ENCODE measurements at regions of chr19 and their contacts with region 1.

Region 1: DNA sequence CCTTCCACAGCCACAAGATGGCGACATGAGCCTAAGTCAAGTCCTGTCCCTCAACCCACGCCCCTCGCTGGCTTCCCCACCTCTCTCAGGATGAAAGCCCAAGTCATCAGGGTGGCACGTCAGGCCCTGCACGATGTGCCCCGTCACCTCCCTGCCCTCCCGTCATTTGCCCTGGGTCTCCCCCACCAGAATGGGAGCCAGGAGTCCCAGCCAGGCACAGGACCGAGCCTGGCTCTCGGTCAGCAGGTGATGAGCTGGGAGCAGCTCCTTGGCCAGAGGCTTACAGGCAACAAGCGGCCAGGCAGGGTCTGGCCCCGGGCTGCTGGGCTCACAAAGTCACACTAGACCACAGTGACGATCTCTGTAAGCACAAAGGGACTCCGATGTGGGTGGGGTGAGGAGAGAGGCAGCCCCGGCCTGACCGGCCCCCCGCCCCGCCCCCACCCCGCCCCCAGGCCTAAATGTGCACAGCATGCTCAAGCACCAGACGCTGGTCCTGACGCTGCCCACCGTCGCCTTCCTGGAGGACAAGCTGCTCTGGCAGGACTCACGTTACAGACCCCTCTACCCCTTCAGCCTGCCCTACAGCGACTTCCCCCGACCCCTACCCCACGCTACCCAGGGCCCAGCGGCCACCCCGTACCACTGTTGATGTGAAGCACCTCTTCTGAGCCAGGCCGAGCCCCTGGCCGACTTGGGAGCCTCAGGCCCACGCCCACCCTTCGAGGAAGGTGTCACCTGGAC is 7.3 kb downstream of the MRPL4 start:
- DNase-seq: no peak
- H3K4me3 ChIP-seq: no peak overlapping the region
- CTCF ChIP-seq: peak; percentile 71

Region 2: GRCh38 chr19:10226021-10226375 is 33.3 kb before region 1 on chr19:
- CTCF ChIA-PET with region 1: no interaction called
- POLR2A ChIA-PET with region 1: no interaction called
- DNase-seq: no peak
- H3K4me3 ChIP-seq: no peak overlapping the region
- CTCF ChIP-seq: no peak

Region 3: DNA sequence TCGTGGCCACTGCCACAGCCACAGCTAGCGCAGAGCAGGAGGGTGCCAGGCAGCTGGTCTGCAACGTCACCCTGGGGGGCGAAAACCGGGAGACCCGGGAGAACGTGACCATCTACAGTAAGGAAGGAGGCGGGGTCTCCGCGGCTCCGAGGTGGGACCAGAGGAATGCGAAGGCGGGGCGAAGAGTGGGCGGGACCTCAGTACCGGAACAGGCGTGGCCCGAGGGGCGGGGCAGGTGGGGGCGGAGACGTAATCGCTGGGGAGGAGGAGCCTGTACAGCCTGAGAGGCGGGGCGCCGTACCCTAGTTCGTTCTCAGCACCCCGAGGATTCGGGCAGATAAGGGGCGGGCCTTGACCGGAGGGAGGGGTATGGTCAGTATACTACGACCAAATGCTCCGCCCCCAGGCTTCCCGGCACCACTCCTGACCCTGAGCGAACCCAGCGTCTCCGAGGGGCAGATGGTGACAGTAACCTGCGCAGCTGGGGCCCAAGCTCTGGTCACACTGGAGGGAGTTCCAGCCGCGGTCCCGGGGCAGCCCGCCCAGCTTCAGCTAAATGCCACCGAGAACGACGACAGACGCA is 33.0 kb after region 1 on chr19:
- CTCF ChIA-PET with region 1: interaction called, 14 read pairs
- POLR2A ChIA-PET with region 1: no interaction called
- DNase-seq: no peak
- H3K4me3 ChIP-seq: peak overlapping the region; percentile 60
- CTCF ChIP-seq: no peak

Region 4: DNA sequence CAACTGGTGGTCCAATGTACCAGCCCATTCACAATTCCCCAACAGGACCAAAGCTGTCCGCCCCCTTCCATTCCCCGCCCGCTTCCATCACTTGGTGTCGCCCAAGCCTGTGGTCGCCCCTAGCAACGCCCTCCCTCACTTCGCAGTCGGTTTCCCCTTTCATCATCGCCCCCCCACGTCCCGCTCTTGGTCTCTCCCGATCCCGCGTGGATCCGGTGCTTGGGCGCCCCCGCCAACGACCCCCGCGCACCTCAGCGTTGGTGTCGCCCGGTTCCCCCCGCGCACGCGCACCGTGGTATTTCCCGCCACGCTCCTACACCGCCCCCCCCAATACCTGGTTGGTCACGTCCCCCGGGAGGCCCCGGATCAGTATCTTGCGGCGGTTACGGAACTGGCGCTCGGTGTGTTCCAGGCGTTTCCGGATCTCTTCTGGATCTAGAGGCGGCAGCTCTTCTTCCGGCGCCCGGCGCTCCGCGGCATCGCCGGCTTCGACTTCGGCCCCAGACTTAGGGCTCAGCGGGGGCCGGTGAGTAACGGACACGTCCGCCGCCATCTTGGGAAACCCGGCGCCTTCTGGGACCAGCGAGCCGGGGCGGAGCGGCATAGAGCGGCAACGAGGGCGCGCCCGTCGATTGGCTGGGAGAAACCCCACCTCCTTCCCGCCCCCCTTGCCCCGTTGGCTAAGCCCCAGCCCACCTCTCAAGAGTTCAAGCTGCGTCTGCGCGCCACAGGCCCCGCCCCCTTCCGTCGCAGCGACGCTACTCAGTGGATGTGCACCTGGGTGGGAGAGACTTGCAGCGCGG is 73.8 kb after region 1 on chr19 and contains the start of gene RAVER1:
- CTCF ChIA-PET with region 1: interaction called, 21 read pairs
- POLR2A ChIA-PET with region 1: interaction called, 3 read pairs
- DNase-seq: peak; percentile 67
- H3K4me3 ChIP-seq: peak within 1 kb of the TSS; percentile 87
- CTCF ChIP-seq: no peak

Region 5: DNA sequence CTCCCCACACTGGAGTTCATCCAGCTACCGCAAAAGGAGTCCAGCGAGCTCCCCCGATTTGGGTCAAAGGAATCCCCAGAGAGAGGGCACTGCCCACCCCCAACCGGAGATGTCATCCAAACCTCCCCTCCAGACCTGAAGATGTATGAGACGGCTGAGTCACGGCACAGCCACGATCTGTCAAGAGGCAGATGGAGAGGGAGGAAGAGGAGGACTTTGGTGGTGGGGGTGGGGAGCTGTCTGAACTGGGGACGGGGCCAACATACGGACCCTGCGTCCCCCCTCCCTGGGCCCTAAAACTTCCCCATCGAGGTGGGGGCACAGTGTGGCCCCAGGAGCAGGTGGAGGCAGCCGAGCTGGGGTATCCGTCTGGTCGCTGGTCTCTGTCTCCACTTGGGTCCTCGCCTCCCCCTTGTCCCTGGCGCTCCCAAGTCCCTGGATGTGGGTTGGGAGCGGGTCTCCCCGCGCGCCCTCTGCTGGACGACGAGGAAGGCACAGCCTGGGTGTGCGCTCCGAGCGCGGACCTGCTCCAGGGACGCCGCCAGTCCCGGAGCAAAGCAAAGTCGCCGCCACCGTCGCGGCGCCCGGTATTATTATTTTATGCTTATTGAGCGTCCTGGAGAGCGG is 164.8 kb after region 1 on chr19:
- CTCF ChIA-PET with region 1: interaction called, 10 read pairs
- POLR2A ChIA-PET with region 1: no interaction called
- DNase-seq: no peak
- H3K4me3 ChIP-seq: peak overlapping the region; percentile 52
- CTCF ChIP-seq: peak; percentile 98